ENCODE measurements at regions of chr1 and their contacts with region 1.

Region 1: GRCh38 chr1:179081687-179082332 is at the start of gene TOR3A:
- DNase-seq: peak; percentile 96
- H3K4me3 ChIP-seq: peak within 1 kb of the TSS; percentile 80 to 85
- H3K27ac ChIP-seq: peak within 1 kb of the TSS; percentile 75 to 76
- H3K4me1 ChIP-seq: no peaks in the 10 kb centered on the region
- H3K27me3 ChIP-seq: no peaks in the 10 kb centered on the region
- CTCF ChIP-seq: no peak
- POLR2A ChIP-seq: peak; percentile 87
- total RNA-seq, gene TOR3A: 40.0 to 109 TPM

Region 2: DNA sequence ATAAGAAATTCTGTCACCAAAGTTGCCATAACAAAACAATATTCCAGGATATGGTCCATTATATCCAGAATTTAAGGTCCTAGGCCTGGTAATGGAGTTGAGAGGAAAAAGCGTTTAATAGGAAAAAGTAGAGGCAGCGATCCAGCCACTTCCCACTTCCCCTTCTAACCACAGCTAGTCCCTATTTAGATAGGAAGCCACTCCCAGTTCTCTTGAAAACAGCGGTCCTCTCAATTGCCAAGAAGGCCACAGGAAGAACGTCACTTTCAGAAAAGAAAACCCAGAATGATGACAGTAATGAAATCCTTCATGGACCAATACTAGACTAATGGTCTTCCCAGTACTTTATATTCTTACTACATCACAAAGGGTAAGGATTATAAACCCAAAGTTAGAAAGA is 109.1 kb after region 1 on chr1:
- intact Hi-C with region 1: loop called (anchors 10 kb)
- DNase-seq: no peak
- H3K4me3 ChIP-seq: no peak overlapping the region
- H3K27ac ChIP-seq: no peak overlapping the region
- H3K4me1 ChIP-seq: no peaks in the 10 kb centered on the region
- H3K27me3 ChIP-seq: no peaks in the 10 kb centered on the region
- CTCF ChIP-seq: no peak
- POLR2A ChIP-seq: no peak

Region 3: DNA sequence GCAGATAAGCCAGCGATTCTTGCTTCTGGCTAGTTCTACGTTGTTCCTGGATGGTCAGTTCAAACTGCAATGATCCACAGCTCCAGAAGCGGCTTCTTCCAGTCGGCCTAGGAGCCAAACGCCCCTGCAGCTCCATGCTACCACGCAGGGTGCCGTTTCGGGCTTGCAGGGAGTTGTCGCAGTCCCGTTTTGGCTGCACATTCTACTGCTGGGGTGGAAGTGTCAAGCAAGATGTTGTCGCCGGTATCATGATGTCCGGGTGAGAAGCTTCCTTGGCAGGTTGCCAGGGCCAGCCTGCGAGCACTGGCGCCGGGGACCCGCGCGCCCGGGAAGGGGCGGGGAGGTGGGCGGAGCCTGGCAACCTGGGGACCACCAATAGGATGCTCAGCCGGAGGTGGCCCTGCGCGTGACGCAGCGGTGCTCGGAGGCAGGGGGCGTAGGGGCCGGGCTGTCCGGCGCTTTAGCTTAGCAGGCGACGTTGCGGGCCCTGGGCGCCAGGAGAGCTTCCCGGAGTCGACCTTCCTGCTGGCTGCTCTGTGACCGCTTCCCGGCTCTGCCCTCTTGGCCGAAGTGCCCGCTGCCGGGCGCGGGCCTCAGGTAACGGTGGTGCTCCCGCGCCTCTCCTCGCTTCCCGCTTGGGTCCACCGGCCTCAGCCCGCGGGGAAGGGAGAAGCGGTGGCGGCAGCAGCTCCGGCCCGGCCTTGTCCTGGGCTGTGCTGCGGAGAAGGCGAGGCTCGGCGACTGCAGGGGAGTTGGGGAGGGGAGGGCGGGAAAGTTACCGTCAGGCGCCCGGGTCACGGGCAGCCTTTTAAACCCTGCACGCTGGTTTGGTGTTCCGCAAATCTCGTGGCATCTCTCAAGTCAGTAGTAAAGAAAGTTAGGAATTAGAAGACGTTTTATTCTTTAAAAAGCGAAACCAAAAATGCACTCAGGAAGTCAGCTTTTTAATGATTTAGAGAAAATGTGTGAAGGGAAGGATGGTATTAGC is 211.8 kb after region 1 on chr1 and contains the start of gene SOAT1:
- intact Hi-C with region 1: loop called (anchors 5 kb)
- DNase-seq: peak; percentile 95
- H3K4me3 ChIP-seq: peak within 1 kb of the TSS; percentile 75 to 84
- H3K27ac ChIP-seq: peak within 1 kb of the TSS; percentile 94 to 96
- H3K4me1 ChIP-seq: peaks cover 10% of the 10 kb centered on the region
- H3K27me3 ChIP-seq: no peaks in the 10 kb centered on the region
- CTCF ChIP-seq: peak in 3 of 4 experiments; percentile 14 to 55 (median 47)
- POLR2A ChIP-seq: peak; percentile 88
- total RNA-seq, gene SOAT1: 30.9 to 47.2 TPM

Region 4: DNA sequence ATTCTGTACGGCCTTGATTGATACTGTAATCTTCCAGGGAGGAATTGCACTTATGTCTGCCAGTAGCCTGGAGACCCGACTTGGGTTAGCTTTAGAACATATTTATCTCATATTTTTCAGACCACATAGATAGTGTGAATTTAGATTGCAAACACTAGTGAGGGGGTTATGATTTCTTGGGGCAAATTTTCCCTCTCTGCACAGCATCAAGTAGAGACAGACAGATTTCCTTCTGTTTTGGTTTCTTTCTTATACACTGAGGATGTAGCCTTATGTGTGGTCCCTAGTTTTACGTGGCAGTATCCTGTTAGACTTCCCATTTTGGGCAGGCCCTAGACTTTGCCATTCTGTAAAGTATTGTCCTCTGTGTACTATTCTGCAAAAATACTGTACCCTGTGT is 240.7 kb after region 1 on chr1:
- intact Hi-C with region 1: no loop called
- DNase-seq: no peak
- H3K4me3 ChIP-seq: no peak overlapping the region
- H3K27ac ChIP-seq: no peak overlapping the region
- H3K4me1 ChIP-seq: no peaks in the 10 kb centered on the region
- H3K27me3 ChIP-seq: no peaks in the 10 kb centered on the region
- CTCF ChIP-seq: no peak
- POLR2A ChIP-seq: no peak

Region 5: DNA sequence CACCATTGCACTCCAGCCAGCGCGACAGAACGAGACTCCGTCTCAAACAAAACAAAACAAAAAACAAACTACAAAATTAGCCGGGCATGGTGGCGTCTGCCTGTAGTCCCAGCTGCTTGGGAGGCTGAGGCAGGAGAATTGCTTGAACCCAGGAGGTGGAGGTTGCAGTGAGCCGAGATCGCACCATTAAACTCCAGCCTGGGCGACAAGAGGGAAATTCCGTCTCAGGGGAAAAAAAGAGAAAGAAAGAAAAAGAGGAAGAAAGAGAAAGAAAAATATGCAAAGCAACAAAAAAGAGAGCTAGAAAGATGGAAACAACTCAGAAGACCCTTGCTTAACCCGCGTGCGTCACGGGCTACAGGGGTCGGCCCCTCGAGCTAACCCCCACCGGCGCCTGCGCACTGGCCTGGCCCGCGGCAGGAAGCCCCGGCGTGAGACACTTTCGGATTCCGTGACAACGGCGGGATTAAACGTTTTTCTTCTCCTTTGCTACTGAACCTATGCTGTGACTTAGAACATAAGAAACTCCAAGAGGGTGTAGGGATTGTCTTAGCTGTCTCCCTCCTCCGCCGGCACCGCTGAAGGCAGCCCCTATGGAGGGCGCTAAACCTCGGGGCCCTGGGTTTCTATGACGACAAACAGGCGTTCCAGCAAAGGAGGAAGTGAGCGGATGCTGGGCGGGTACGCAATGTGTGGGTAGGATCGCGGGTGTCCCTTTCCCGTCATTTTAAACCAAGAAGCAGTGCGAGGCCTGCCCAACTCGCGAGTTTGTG is 283.7 kb after region 1 on chr1 and contains the start of gene AXDND1:
- intact Hi-C with region 1: loop called (anchors 5 kb)
- DNase-seq: peak; percentile 75
- H3K4me3 ChIP-seq: peak within 1 kb of the TSS; percentile 48 to 57
- H3K27ac ChIP-seq: peak within 1 kb of the TSS; percentile 89 to 93
- H3K4me1 ChIP-seq: no peaks in the 10 kb centered on the region
- H3K27me3 ChIP-seq: no peaks in the 10 kb centered on the region
- CTCF ChIP-seq: peak in 2 of 4 experiments; percentile 20 to 32
- POLR2A ChIP-seq: peak; percentile 40
- total RNA-seq, gene AXDND1: 7.0 TPM in 1 of 2 donors, not detected in the other

Region 6: DNA sequence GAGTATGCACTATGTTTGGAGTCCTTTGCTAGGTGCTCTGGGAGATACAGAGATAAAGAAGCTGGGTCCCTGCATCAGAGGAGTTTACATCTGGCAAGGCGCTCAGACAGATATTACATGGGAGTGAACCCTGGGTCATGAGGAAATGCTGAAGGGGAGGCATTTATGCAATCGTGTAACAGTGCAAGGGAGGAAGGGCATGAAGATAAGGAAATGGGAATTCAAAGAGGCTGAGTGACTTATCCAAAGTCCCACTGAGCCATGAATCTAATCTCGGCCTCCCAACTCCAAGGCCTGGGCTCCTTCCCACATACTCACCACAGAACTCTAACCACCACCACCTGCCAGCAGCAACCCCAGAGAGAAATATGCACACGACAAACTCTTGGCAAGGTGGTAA is 712.9 kb after region 1 on chr1:
- intact Hi-C with region 1: no loop called
- DNase-seq: no peak
- H3K4me3 ChIP-seq: no peak overlapping the region
- H3K27ac ChIP-seq: no peak overlapping the region
- H3K4me1 ChIP-seq: no peaks in the 10 kb centered on the region
- H3K27me3 ChIP-seq: no peaks in the 10 kb centered on the region
- CTCF ChIP-seq: no peak
- POLR2A ChIP-seq: no peak